ENCODE measurements at regions of chr5 and their contacts with region 1.

Region 1: GRCh38 chr5:174910245-174910737 is 185.9 kb downstream of the MSX2 start:
- DNase-seq: peak; percentile 52
- ATAC-seq: peak; percentile 99
- H3K4me3 ChIP-seq: peak overlapping the region in 1 of 2 experiments; percentile 38; a peak in 2 of 4 replicates
- H3K27ac ChIP-seq: no peak overlapping the region
- H3K4me1 ChIP-seq: no peaks in the 10 kb centered on the region
- H3K27me3 ChIP-seq: peaks cover 5% of the 10 kb centered on the region; the same call in 1 of the 2 replicates
- CTCF ChIP-seq: peak; percentile 96

Region 2: GRCh38 chr5:174596429-174596828 is 313.9 kb before region 1 on chr5:
- CTCF ChIA-PET with region 1: no interaction called
- POLR2A ChIA-PET with region 1: interaction called, 16 read pairs
- in situ Hi-C with region 1: no loop called
- intact Hi-C with region 1: no loop called
- DNase-seq: no peak
- ATAC-seq: no peak
- H3K4me3 ChIP-seq: no peak overlapping the region
- H3K27ac ChIP-seq: no peak overlapping the region
- H3K4me1 ChIP-seq: 0 out of 2 replicates have a peak, but pooled peaks cover 4% of the 10 kb centered on the region
- H3K27me3 ChIP-seq: no peaks in the 10 kb centered on the region
- CTCF ChIP-seq: no peak

Region 3: DNA sequence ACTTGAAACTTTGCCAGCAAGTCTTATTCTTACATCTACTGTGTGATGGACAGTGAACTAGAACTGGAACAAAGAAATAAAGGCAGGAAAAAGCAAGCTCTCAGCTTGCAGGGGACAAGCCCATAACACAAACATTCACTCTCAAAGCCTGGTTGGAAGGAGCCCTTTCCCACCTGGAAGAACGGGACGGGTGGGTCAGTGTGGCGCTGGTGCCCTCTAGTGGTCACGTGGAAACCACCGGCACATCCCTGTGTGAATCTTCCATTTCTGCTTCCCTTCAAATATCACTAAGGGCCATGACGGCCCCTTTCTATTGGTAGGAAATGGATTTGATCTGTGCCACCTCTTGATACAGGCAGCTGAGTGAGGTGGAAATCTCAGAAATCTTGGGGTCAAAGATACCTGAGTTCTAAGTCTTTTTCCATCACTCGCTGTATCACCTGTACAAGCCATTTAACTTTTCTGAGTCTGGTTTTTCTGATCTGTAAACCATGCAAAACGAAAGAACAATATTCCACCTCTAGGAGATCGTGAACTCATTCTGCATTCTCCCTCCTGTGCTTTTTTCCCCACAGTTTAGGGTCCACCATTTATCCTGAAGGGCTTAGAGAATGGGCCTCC is 25.7 kb after region 1 on chr5:
- CTCF ChIA-PET with region 1: no interaction called
- POLR2A ChIA-PET with region 1: no interaction called
- in situ Hi-C with region 1: no loop called
- intact Hi-C with region 1: loop called (anchors 1 kb)
- DNase-seq: peak; percentile 51
- ATAC-seq: peak; percentile 92
- H3K4me3 ChIP-seq: no peak overlapping the region
- H3K27ac ChIP-seq: no peak overlapping the region
- H3K4me1 ChIP-seq: no peaks in the 10 kb centered on the region
- H3K27me3 ChIP-seq: peaks cover 2% of the 10 kb centered on the region; the same call in 1 of the 2 replicates
- CTCF ChIP-seq: peak; percentile 96

Measured in Panc1 (cell line).